ENCODE measurements at regions of chr6 and their contacts with region 1.

Region 1: GRCh38 chr6:26223650-26224546 is 136.7 kb downstream of the HFE start:
- DNase-seq: peak; percentile 91
- H3K4me3 ChIP-seq: peak overlapping the region; percentile 57 to 76 (median 68)
- H3K27ac ChIP-seq: peak overlapping the region; percentile 98
- H3K4me1 ChIP-seq: peaks cover 8% of the 10 kb centered on the region
- H3K27me3 ChIP-seq: no peaks in the 10 kb centered on the region
- CTCF ChIP-seq: no peak

Region 2: GRCh38 chr6:26234421-26235296 is 10.8 kb after region 1 on chr6:
- CTCF ChIA-PET with region 1: no interaction called
- dilution Hi-C with region 1: no loop called
- in situ Hi-C with region 1: no loop called
- intact Hi-C with region 1: loop called (anchors 1 kb)
- DNase-seq: peak; percentile 85
- H3K4me3 ChIP-seq: peak overlapping the region; percentile 45 to 51 (median 47)
- H3K27ac ChIP-seq: peak overlapping the region; percentile 69
- H3K4me1 ChIP-seq: peaks cover 3% of the 10 kb centered on the region
- H3K27me3 ChIP-seq: no peaks in the 10 kb centered on the region
- CTCF ChIP-seq: no peak

Measured in mammary epithelial cell (primary cell).